CD14-positive monocyte (primary cell): ENCODE measurements at regions of chr12 and their contacts with region 1.

Region 1: GRCh38 chr12:122526683-122527477 is at the starts of genes KNTC1 and RSRC2:
- DNase-seq: peak; percentile 99
- H3K4me3 ChIP-seq: peak within 1 kb of the TSS; percentile 73 to 100 (median 98)
- H3K4me3 Mint-ChIP-seq: no peak within 1 kb of the TSS
- H3K27ac ChIP-seq: peak within 1 kb of the TSS; percentile 99
- H3K27ac Mint-ChIP-seq: peak within 1 kb of the TSS in 1 of 7 donors; percentile 14
- H3K4me1 ChIP-seq: peaks cover 38 to 41% of the 10 kb centered on the region in 2 donors
- H3K4me1 Mint-ChIP-seq: peaks cover 28% of the 10 kb centered on the region
- H3K27me3 ChIP-seq: no peaks in the 10 kb centered on the region
- H3K27me3 Mint-ChIP-seq: peaks cover 0 to 2% (median 0%) of the 10 kb centered on the region in 3 donors
- CTCF ChIP-seq: no peak
- polyA plus RNA-seq, gene KNTC1: 0.65 to 10.3 (median 0.81) TPM
- polyA plus RNA-seq, gene RSRC2: 7.6 to 63.5 (median 15.8) TPM

Region 2: DNA sequence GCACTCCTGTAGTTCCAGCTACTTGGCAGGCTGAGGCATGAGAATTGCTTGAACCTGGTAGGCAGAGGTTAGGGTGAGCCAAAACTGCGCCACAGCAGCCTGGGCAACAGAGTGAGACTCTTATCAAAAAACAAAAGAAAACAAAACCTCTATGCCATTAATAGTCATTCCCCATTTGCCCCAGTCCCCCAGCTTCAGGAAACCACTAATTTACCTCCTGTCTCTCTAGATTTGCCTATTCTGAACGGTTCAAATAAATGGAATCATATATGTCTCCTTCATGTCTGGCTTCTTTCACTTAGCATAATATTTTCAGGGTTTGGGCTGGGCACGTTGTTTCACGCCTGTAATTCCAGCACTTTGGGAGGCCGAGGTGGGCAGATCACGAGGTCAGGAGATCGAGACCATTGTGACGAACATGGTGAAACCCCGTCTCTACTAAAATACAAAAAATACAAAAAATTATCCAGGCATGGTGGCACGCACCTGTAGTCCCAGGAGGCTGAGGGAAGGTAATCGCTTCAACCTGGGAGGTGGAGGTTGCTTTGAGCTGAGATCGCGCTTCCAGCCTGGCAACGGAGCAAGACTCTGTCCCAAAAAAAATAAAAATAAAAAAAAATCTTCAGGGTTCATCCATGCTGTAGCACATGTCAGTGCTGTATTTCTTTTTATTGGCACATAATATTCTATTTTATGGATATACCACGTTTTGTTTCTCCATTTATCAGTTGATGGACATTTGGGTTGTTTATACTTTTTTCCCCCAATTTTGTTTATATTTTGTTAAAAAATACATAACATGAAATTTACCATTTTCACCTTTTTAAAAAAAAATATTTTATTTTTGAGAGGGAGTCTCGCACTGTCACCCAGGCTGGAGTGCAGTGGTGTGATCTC is 32.1 kb after region 1 on chr12:
- intact Hi-C with region 1: no loop called
- DNase-seq: no peak
- H3K4me3 ChIP-seq: no peak overlapping the region
- H3K4me3 Mint-ChIP-seq: no peak overlapping the region
- H3K27ac ChIP-seq: no peak overlapping the region
- H3K27ac Mint-ChIP-seq: peak overlapping the region in 2 of 7 donors; percentile 15 to 21
- H3K4me1 ChIP-seq: no peaks in the 10 kb centered on the region
- H3K4me1 Mint-ChIP-seq: peaks cover 3% of the 10 kb centered on the region
- H3K27me3 ChIP-seq: no peaks in the 10 kb centered on the region
- H3K27me3 Mint-ChIP-seq: peaks cover 0 to 1% (median 0%) of the 10 kb centered on the region in 3 donors
- CTCF ChIP-seq: no peak

Region 3: DNA sequence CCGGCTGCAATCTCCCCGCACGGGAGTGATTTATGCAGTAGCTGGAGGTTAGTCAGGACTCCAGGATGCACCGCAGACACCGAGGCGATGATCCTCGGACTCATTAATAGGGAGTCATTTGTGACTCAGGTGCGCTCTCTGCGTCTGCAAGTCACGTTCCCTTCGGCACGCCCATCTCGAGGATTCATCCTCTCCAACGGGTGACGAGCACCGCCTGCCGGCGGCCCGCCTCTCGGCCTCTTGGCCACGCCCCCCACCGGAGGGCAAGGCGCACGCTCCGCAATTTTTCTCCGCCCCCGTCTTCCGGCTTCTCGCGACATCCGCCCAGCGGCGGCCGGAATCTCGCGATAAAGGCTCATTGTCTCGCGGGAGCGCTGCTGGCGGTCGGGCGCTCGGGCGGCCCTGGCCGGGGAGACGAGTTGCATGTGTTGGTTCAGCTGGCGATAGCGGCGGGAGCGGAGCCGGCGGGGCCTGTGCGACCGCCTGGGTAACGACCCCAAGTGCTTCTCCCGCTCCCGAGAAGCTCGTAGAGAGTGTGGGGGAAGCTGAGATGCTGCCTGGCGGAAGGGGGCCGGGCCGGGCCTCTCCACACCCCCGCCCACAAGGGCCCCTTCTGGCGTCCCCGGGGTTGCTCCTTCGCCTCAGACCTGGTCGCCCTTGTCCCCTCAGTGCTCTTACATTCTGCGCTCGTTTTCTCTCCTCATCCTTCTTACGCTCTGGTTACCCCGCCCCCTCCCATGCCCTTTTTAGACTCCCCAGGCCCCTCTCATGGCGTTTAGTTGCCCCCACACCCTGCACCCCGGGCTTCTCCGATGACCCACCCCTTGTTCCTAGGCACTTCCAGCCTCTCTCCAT is 225.8 kb after region 1 on chr12 and contains the start of gene DENR:
- intact Hi-C with region 1: loop called in 1 of 2 experiments (anchors 10 kb)
- DNase-seq: peak; percentile 97 to 99 (median 98)
- H3K4me3 ChIP-seq: peak within 1 kb of the TSS; percentile 69 to 89 (median 86)
- H3K4me3 Mint-ChIP-seq: peak within 1 kb of the TSS; percentile 94 to 98
- H3K27ac ChIP-seq: peak within 1 kb of the TSS; percentile 65 to 94
- H3K27ac Mint-ChIP-seq: peak within 1 kb of the TSS; percentile 78 to 99 (median 96)
- H3K4me1 ChIP-seq: peaks cover 17 to 23% of the 10 kb centered on the region in 2 donors
- H3K4me1 Mint-ChIP-seq: peaks cover 31% of the 10 kb centered on the region
- H3K27me3 ChIP-seq: no peaks in the 10 kb centered on the region
- H3K27me3 Mint-ChIP-seq: peaks cover 0 to 3% (median 0%) of the 10 kb centered on the region in 3 donors
- CTCF ChIP-seq: peak; percentile 85
- polyA plus RNA-seq, gene DENR: 11.2 to 34.1 (median 32.5) TPM